Naive thymus-derived CD4-positive, alpha-beta T cell (primary cell): ENCODE measurements at regions of chr15 and their contacts with region 1.

Region 1: GRCh38 chr15:25850154-25851111 is 12.7 kb downstream of the ATP10A start:
- DNase-seq: peak; percentile 42 to 78 (median 73)
- ATAC-seq: peak; percentile 79
- H3K4me3 ChIP-seq: peak overlapping the region; percentile 65
- H3K4me3 Mint-ChIP-seq: peak overlapping the region; percentile 84 to 98 (median 94)
- H3K27ac ChIP-seq: peak overlapping the region; percentile 73
- H3K27ac Mint-ChIP-seq: peak overlapping the region; percentile 89 to 100 (median 98)
- H3K4me1 ChIP-seq: peaks cover 28 to 73% of the 10 kb centered on the region in 2 donors
- H3K4me1 Mint-ChIP-seq: peaks cover 64 to 100% (median 92%) of the 10 kb centered on the region in 7 donors
- H3K27me3 ChIP-seq: no peaks in the 10 kb centered on the region
- H3K27me3 Mint-ChIP-seq: no peaks in the 10 kb centered on the region

Region 2: GRCh38 chr15:25433118-25433865 is 417.1 kb before region 1 on chr15:
- CTCF ChIA-PET with region 1: no interaction called
- POLR2A ChIA-PET with region 1: no interaction called
- intact Hi-C with region 1: loop called (anchors 1 to 2 kb)
- DNase-seq: no peak
- ATAC-seq: no peak
- H3K4me3 ChIP-seq: no peak overlapping the region
- H3K4me3 Mint-ChIP-seq: peak overlapping the region in 6 of 10 donors; percentile 4 to 60 (median 34)
- H3K27ac ChIP-seq: no peak overlapping the region
- H3K27ac Mint-ChIP-seq: peak overlapping the region in 2 of 9 donors; percentile 3 to 17
- H3K4me1 ChIP-seq: peaks cover 32 to 52% of the 10 kb centered on the region in 2 donors
- H3K4me1 Mint-ChIP-seq: peaks cover 42 to 94% (median 72%) of the 10 kb centered on the region in 7 donors
- H3K27me3 ChIP-seq: no peaks in the 10 kb centered on the region
- H3K27me3 Mint-ChIP-seq: no peaks in the 10 kb centered on the region

Region 3: DNA sequence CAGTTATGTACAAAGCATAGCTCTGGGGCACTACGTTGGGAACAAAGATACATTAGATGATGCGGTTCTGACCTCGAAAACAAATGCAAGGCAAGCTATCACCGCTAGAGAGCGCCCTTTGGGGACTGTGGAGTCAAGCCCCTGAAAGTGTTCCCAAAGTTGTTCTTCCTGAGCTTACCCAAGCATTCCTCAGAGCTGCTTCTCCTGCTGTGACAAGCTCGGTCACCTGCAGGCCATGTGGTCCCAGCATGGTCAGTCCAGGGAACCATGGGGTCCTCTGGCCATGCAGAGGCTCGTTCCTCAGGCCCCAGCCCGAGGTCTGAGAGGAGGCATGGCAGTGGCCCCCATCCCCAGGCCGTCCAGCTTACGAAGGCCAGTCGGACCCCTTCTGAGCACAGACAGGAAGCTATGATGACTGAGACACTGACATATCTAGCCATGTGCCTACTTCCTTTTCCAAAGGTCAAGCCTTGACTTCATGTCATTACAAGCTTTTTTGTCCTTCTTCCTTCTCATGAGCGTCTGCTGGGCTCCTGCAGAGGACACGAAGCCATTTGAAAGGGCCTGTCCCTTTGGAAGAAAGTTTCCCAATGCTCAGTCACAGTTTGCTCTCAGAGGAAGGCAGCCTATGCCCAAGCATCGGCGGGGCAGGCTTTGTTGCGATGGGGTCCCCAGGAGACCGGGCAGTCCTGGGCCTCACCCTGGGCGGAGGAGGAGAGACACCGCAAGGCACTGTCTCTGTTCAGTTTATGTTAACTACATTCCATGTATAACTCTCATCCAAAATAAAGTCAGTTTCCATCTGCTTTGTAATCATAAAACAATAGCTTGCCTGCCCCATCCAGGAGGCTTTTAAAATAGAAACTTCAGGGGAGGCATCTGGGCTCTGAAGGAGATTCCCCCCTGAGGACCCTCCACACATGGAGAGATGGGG is 66.6 kb before region 1 on chr15:
- CTCF ChIA-PET with region 1: interaction called, 4 read pairs
- POLR2A ChIA-PET with region 1: interaction called, 7 read pairs
- intact Hi-C with region 1: loop called in 1 of 2 experiments (anchors 1 kb)
- DNase-seq: peak in 6 of 9 donors; percentile 22 to 50 (median 40)
- ATAC-seq: peak; percentile 52
- H3K4me3 ChIP-seq: no peak overlapping the region
- H3K4me3 Mint-ChIP-seq: peak overlapping the region in 1 of 10 donors; percentile 16
- H3K27ac ChIP-seq: no peak overlapping the region
- H3K27ac Mint-ChIP-seq: peak overlapping the region; percentile 1 to 88 (median 62)
- H3K4me1 ChIP-seq: peaks cover 0 to 5% of the 10 kb centered on the region in 2 donors
- H3K4me1 Mint-ChIP-seq: peaks cover 37 to 62% (median 45%) of the 10 kb centered on the region in 7 donors
- H3K27me3 ChIP-seq: no peaks in the 10 kb centered on the region
- H3K27me3 Mint-ChIP-seq: no peaks in the 10 kb centered on the region

Region 4: GRCh38 chr15:25811481-25811906 is 38.9 kb before region 1 on chr15:
- CTCF ChIA-PET with region 1: interaction called, 3 read pairs
- POLR2A ChIA-PET with region 1: interaction called, 40 read pairs
- intact Hi-C with region 1: loop called (anchors 1 to 2 kb)
- DNase-seq: peak in 5 of 9 donors; percentile 20 to 47 (median 27)
- ATAC-seq: peak; percentile 50
- H3K4me3 ChIP-seq: peak overlapping the region; percentile 37
- H3K4me3 Mint-ChIP-seq: peak overlapping the region; percentile 74 to 95 (median 84)
- H3K27ac ChIP-seq: peak overlapping the region; percentile 64
- H3K27ac Mint-ChIP-seq: peak overlapping the region; percentile 80 to 98 (median 94)
- H3K4me1 ChIP-seq: peaks cover 20 to 51% of the 10 kb centered on the region in 2 donors
- H3K4me1 Mint-ChIP-seq: peaks cover 45 to 98% (median 81%) of the 10 kb centered on the region in 7 donors
- H3K27me3 ChIP-seq: no peaks in the 10 kb centered on the region
- H3K27me3 Mint-ChIP-seq: no peaks in the 10 kb centered on the region

Region 5: DNA sequence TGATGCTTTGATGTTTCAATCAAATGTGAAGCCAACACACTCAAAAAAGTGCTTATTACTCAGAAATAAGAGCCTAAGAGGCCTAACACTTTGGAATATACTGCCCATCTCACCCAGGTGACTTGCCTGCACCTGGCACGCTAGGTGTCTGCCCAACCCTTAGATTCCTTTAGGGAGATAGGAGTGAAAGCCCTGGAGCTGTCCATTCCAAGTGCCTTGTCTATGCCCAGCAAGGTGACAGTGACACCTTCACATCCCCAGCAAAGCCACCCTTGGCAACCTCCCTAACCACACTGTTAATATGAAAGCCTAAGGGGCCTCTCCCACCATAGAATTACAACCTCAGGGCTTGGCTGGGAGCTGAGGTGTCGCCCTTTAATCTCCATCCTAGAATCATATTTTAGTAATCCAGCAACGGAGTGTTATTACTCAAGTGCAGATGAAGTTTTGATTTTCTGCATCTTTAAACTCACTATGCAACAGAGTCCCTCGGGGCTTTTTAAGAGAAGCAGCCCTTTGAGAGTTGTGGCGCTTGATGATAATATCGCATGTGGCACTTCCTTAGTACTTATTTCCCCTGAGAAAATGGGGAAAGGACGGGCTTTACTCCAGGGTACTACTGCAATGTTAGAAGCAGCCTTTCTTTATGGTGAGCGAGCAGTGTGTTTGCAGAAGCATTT is 12.1 kb before region 1 on chr15:
- CTCF ChIA-PET with region 1: no interaction called
- POLR2A ChIA-PET with region 1: interaction called, 10 read pairs
- intact Hi-C with region 1: no loop called
- DNase-seq: no peak
- ATAC-seq: no peak
- H3K4me3 ChIP-seq: no peak overlapping the region
- H3K4me3 Mint-ChIP-seq: peak overlapping the region in 8 of 10 donors; percentile 8 to 75 (median 40)
- H3K27ac ChIP-seq: no peak overlapping the region
- H3K27ac Mint-ChIP-seq: peak overlapping the region in 4 of 9 donors; percentile 48 to 74 (median 62)
- H3K4me1 ChIP-seq: peaks cover 0 to 14% of the 10 kb centered on the region in 2 donors
- H3K4me1 Mint-ChIP-seq: peaks cover 30 to 90% (median 75%) of the 10 kb centered on the region in 7 donors
- H3K27me3 ChIP-seq: no peaks in the 10 kb centered on the region
- H3K27me3 Mint-ChIP-seq: no peaks in the 10 kb centered on the region

Region 6: GRCh38 chr15:25905140-25905539 is 54.7 kb after region 1 on chr15:
- CTCF ChIA-PET with region 1: no interaction called
- POLR2A ChIA-PET with region 1: no interaction called
- intact Hi-C with region 1: no loop called
- DNase-seq: no peak
- ATAC-seq: peak; percentile 31
- H3K4me3 ChIP-seq: no peak overlapping the region
- H3K4me3 Mint-ChIP-seq: no peak overlapping the region
- H3K27ac ChIP-seq: no peak overlapping the region
- H3K27ac Mint-ChIP-seq: no peak overlapping the region
- H3K4me1 ChIP-seq: peaks cover 0 to 3% of the 10 kb centered on the region in 2 donors
- H3K4me1 Mint-ChIP-seq: peaks cover 5 to 15% (median 13%) of the 10 kb centered on the region in 7 donors
- H3K27me3 ChIP-seq: no peaks in the 10 kb centered on the region
- H3K27me3 Mint-ChIP-seq: no peaks in the 10 kb centered on the region

Region 7: GRCh38 chr15:26051761-26052675 is 201.6 kb after region 1 on chr15:
- CTCF ChIA-PET with region 1: no interaction called
- POLR2A ChIA-PET with region 1: no interaction called
- intact Hi-C with region 1: no loop called
- DNase-seq: no peak
- ATAC-seq: no peak
- H3K4me3 ChIP-seq: no peak overlapping the region
- H3K4me3 Mint-ChIP-seq: no peak overlapping the region
- H3K27ac ChIP-seq: no peak overlapping the region
- H3K27ac Mint-ChIP-seq: no peak overlapping the region
- H3K4me1 ChIP-seq: no peaks in the 10 kb centered on the region
- H3K4me1 Mint-ChIP-seq: no peaks in the 10 kb centered on the region
- H3K27me3 ChIP-seq: no peaks in the 10 kb centered on the region
- H3K27me3 Mint-ChIP-seq: peaks cover 0 to 27% (median 12%) of the 10 kb centered on the region in 5 donors

Region 8: GRCh38 chr15:26082221-26083109 is 232.0 kb after region 1 on chr15:
- CTCF ChIA-PET with region 1: no interaction called
- POLR2A ChIA-PET with region 1: no interaction called
- intact Hi-C with region 1: loop called in 1 of 2 experiments (anchors 1 kb)
- DNase-seq: peak; percentile 90 to 97 (median 96)
- ATAC-seq: peak; percentile 97
- H3K4me3 ChIP-seq: peak overlapping the region; percentile 83
- H3K4me3 Mint-ChIP-seq: peak overlapping the region; percentile 84 to 97 (median 92)
- H3K27ac ChIP-seq: peak overlapping the region; percentile 78
- H3K27ac Mint-ChIP-seq: peak overlapping the region; percentile 86 to 100 (median 98)
- H3K4me1 ChIP-seq: peaks cover 0 to 3% of the 10 kb centered on the region in 2 donors
- H3K4me1 Mint-ChIP-seq: peaks cover 13 to 58% (median 43%) of the 10 kb centered on the region in 7 donors
- H3K27me3 ChIP-seq: no peaks in the 10 kb centered on the region
- H3K27me3 Mint-ChIP-seq: peaks cover 0 to 18% (median 0%) of the 10 kb centered on the region in 5 donors

Region 9: GRCh38 chr15:26461847-26462608 is 611.6 kb after region 1 on chr15:
- CTCF ChIA-PET with region 1: no interaction called
- POLR2A ChIA-PET with region 1: no interaction called
- intact Hi-C with region 1: no loop called
- DNase-seq: no peak
- ATAC-seq: no peak
- H3K4me3 ChIP-seq: no peak overlapping the region
- H3K4me3 Mint-ChIP-seq: no peak overlapping the region
- H3K27ac ChIP-seq: no peak overlapping the region
- H3K27ac Mint-ChIP-seq: no peak overlapping the region
- H3K4me1 ChIP-seq: no peaks in the 10 kb centered on the region
- H3K4me1 Mint-ChIP-seq: no peaks in the 10 kb centered on the region
- H3K27me3 ChIP-seq: no peaks in the 10 kb centered on the region
- H3K27me3 Mint-ChIP-seq: peaks cover 0 to 14% (median 0%) of the 10 kb centered on the region in 5 donors